ENCODE measurements at regions of chr1 and their contacts with region 1.

Region 1: DNA sequence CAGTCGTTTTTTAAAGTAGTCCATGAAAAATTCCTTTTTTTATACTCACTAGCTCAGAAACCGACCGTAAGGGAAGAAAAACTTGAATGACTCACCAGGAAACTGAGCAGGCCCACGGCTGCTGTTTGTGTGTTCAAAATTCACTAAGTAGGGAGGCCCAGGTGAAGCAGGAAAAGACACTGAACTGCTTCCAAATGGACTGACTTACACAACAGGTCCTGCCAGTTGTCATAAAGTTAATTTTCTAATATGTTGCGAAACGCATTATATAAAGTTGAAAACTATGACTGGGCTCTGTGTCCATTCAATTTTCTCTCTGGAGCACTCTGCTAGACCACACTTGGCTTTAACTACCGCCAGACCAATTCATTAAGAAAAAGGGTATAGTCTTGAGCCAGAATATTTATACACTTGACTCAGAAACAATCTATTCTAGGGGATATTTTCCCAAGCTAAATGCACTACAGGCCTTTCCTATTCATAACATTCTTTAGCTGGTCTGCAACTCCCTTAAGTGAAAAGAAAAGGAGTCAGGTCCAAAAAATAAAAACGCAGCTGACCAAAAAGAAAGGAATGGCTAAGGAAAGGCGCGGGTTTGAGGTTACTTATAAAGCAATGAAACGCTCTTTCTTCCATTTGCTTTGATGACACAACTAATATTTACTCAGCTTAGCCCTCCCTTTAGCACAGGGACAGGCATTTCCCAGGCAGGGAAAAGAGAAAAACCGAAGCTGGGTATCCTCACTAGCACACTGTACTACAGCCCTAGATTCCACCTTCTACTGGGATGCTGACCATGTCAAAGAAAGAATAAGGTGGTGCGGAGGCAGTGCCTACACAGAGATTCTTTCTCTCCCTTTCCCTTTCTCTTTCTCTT is 306.3 kb upstream of the ESRRG start:
- DNase-seq: peak; percentile 9 to 67
- H3K4me3 ChIP-seq: peak overlapping the region in 1 of 2 donors; percentile 11
- H3K27ac ChIP-seq: peak overlapping the region; percentile 71 to 84
- H3K4me1 ChIP-seq: peaks cover 2 to 22% of the 10 kb centered on the region in 2 donors
- H3K27me3 ChIP-seq: no peaks in the 10 kb centered on the region
- CTCF ChIP-seq: no peak

Region 2: GRCh38 chr1:217149791-217150190 is 120.3 kb after region 1 on chr1:
- intact Hi-C with region 1: no loop called
- DNase-seq: no peak
- H3K4me3 ChIP-seq: no peak overlapping the region
- H3K27ac ChIP-seq: no peak overlapping the region
- H3K4me1 ChIP-seq: no peaks in the 10 kb centered on the region
- H3K27me3 ChIP-seq: no peaks in the 10 kb centered on the region
- CTCF ChIP-seq: no peak

Region 3: DNA sequence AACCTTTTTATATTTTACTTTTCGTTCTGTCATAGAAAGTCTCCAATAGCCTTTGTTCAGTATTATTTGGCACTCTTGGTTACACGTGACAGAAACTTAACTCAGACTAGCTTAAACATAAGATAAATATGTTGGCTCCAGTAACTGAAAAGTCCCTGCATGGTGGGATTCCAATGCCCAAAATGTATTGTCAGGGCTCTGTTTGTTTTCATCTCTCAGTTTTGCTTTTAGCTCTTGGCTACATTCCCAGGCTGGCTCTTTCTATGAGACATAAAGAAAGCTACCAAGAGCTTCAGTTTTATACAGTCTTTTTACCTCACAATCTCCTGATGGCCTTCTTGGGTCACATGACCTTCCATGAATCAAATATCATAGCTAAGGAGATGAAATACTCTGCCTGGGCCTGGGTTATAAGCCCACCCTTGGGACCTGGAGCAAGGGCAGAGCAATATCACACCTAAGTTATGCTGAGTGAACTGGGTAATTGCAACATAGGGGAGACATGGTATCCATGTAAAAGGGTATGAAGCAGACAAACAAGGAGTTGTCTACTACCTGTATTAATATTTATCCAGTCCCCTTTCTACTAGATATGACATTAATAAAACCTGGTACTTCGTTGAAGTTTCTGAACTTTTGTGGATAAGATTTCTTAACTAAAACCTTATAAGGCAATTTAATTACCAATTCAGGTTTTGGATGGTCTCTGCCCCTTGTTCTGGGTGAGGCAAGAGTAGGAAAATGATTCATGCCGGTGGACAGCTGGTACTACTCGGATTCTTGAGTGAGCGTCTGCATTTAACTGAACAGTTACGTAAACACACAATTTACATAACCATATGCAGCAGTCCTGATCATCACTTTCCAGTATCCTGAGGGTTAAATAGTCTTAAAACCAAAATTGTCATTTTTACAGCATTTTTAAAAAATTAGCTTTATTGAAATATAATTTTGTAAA is 159.0 kb after region 1 on chr1:
- intact Hi-C with region 1: loop called (anchors 10 kb)
- DNase-seq: no peak
- H3K4me3 ChIP-seq: no peak overlapping the region
- H3K27ac ChIP-seq: no peak overlapping the region
- H3K4me1 ChIP-seq: no peaks in the 10 kb centered on the region
- H3K27me3 ChIP-seq: no peaks in the 10 kb centered on the region
- CTCF ChIP-seq: no peak

Region 4: GRCh38 chr1:217275655-217276398 is 246.3 kb after region 1 on chr1:
- intact Hi-C with region 1: loop called (anchors 10 kb)
- DNase-seq: no peak
- H3K4me3 ChIP-seq: peak overlapping the region in 1 of 2 donors; percentile 12
- H3K27ac ChIP-seq: peak overlapping the region; percentile 57
- H3K4me1 ChIP-seq: no peaks in the 10 kb centered on the region
- H3K27me3 ChIP-seq: no peaks in the 10 kb centered on the region
- CTCF ChIP-seq: no peak

Measured in ascending aorta (tissue), 2 donors.